ENCODE measurements at regions of chr6 and their contacts with region 1.

Region 1: GRCh38 chr6:111361648-111362047 is 121.4 kb downstream of the REV3L start:
- DNase-seq: no peak
- ATAC-seq: no peak
- H3K4me3 Mint-ChIP-seq: no peak overlapping the region
- H3K27ac Mint-ChIP-seq: no peak overlapping the region
- H3K4me1 Mint-ChIP-seq: no peaks in the 10 kb centered on the region
- H3K27me3 Mint-ChIP-seq: no peaks in the 10 kb centered on the region
- CTCF ChIP-seq: no peak

Region 2: GRCh38 chr6:110703010-110703905 is 658.4 kb before region 1 on chr6:
- CTCF ChIA-PET with region 1: no interaction called
- POLR2A ChIA-PET with region 1: no interaction called
- intact Hi-C with region 1: no loop called
- DNase-seq: no peak
- ATAC-seq: no peak
- H3K4me3 Mint-ChIP-seq: no peak overlapping the region
- H3K27ac Mint-ChIP-seq: no peak overlapping the region
- H3K4me1 Mint-ChIP-seq: peaks cover 7% of the 10 kb centered on the region
- H3K27me3 Mint-ChIP-seq: no peaks in the 10 kb centered on the region
- CTCF ChIP-seq: no peak

Region 3: DNA sequence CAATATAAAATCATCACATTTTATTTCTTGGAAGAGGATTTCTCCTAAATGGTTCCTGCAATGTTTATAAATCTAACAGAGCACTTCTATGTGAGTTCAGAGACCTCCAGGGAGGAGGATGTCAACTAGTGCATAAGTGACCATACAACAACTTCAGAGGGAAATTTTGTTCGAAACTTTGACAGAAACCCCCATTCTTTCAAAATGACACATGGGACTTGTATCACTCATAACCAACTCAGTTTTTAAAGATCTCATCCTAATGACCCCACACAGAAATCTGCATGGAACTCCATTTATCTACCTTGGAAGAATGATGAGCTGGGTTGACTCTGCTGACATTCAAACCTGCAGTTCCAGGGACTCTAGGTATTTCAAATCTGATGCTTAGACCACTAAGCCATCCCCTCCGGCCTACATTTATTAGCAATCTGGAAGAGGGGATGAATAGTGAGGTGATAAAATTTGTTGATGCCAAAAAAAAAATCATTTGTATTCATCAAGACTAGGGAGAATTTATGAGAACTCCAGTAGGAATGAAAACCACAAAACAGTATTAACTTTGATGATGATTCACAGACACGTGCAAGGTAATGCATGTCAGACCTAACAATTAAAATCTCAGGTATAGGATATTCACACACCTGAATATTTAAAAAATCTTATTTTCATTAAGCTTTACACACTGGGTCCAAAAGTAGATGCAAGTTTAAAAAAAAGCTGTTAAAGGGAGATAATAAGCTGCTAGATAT is 31.6 kb before region 1 on chr6:
- CTCF ChIA-PET with region 1: no interaction called
- POLR2A ChIA-PET with region 1: no interaction called
- intact Hi-C with region 1: no loop called
- DNase-seq: no peak
- ATAC-seq: no peak
- H3K4me3 Mint-ChIP-seq: no peak overlapping the region
- H3K27ac Mint-ChIP-seq: no peak overlapping the region
- H3K4me1 Mint-ChIP-seq: no peaks in the 10 kb centered on the region
- H3K27me3 Mint-ChIP-seq: no peaks in the 10 kb centered on the region
- CTCF ChIP-seq: no peak

Region 4: GRCh38 chr6:111441678-111442243 is 80.1 kb after region 1 on chr6:
- CTCF ChIA-PET with region 1: no interaction called
- POLR2A ChIA-PET with region 1: no interaction called
- intact Hi-C with region 1: no loop called
- DNase-seq: no peak
- ATAC-seq: peak; percentile 75
- H3K4me3 Mint-ChIP-seq: peak overlapping the region; percentile 71
- H3K27ac Mint-ChIP-seq: peak overlapping the region; percentile 83
- H3K4me1 Mint-ChIP-seq: peaks cover 29% of the 10 kb centered on the region
- H3K27me3 Mint-ChIP-seq: no peaks in the 10 kb centered on the region
- CTCF ChIP-seq: no peak

Region 5: GRCh38 chr6:111642463-111643158 is 281.0 kb after region 1 on chr6:
- CTCF ChIA-PET with region 1: no interaction called
- POLR2A ChIA-PET with region 1: no interaction called
- intact Hi-C with region 1: loop called (anchors 5 kb)
- DNase-seq: no peak
- ATAC-seq: peak; percentile 69
- H3K4me3 Mint-ChIP-seq: no peak overlapping the region
- H3K27ac Mint-ChIP-seq: no peak overlapping the region
- H3K4me1 Mint-ChIP-seq: no peaks in the 10 kb centered on the region
- H3K27me3 Mint-ChIP-seq: no peaks in the 10 kb centered on the region
- CTCF ChIP-seq: no peak

Measured in activated B cell treated with CpG ODN at 0.5 μM for 24 hours (primary cell).